IMR-90 (cell line): ENCODE measurements at regions of chr1 and their contacts with region 1.

Region 1: DNA sequence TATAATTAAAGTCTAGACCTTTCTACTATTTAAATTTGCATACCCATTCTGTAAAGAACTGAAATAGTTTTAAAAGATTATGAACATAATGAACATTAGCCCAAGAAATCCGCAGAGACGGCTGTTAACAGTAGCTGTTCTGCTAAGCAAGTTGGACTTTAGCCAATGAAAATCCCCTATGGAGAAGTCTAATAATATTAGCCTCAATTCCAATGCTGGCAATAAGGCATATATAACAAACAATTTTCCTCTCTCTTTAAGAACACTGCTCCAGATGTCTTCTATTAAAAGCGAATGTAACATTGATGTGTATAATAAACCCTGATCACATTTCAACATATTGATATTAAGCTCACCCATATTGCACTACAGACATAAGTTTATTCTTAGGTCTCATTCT is 221.3 kb upstream of the KCTD3 start:
- DNase-seq: peak; percentile 14
- ATAC-seq: no peak
- H3K4me3 ChIP-seq: no peak overlapping the region
- H3K27ac ChIP-seq: no peak overlapping the region
- H3K4me1 ChIP-seq: no peaks in the 10 kb centered on the region
- H3K27me3 ChIP-seq: no peaks in the 10 kb centered on the region
- CTCF ChIP-seq: no peak
- POLR2A ChIP-seq: no peak
- RAD21 ChIP-seq: no peak

Region 2: DNA sequence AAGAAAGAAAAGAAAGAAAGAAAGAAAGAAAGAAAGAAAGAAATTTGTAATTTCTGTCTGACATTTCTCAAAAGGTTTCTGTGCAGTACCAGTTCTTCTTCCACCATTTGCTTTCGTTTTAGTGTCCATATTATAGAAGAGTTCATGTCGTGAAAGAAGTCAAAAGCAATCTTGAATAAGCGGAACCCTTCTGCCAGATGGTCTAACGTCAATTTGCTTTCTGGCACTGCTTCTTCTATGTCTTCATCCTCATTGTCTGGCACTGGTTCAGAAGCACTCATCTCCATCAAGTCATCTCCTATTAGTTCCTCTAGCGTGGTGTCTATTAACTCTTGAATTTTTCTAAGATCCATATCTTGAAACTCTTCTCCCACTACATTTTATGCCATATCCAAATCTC is 51.3 kb after region 1 on chr1:
- CTCF ChIA-PET with region 1: no interaction called
- POLR2A ChIA-PET with region 1: no interaction called
- dilution Hi-C with region 1: no loop called
- in situ Hi-C with region 1: no loop called
- intact Hi-C with region 1: loop called (anchors 5 kb)
- DNase-seq: no peak
- ATAC-seq: no peak
- H3K4me3 ChIP-seq: no peak overlapping the region
- H3K27ac ChIP-seq: no peak overlapping the region
- H3K4me1 ChIP-seq: no peaks in the 10 kb centered on the region
- H3K27me3 ChIP-seq: no peaks in the 10 kb centered on the region; the same call in 1 of the 2 replicates
- CTCF ChIP-seq: no peak
- POLR2A ChIP-seq: no peak
- RAD21 ChIP-seq: no peak

Region 3: DNA sequence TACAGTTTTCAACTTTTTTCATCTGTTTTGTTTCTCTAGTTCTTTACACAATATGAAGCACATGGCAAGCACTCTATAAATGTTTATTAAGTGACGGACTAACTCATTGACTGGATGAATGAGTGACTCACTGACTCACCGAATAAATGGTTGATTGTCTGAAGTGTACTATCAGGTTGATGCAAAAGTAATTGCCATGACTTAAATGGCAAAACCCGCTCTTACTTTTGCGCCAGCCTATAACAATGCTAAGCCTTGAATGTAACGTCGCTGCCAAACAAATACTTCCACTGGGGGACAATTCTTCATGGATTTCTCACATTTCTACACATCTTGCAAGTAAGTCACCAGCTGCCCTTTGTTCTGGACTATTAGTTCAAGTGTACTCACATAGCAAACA is 112.3 kb after region 1 on chr1:
- CTCF ChIA-PET with region 1: no interaction called
- POLR2A ChIA-PET with region 1: no interaction called
- dilution Hi-C with region 1: no loop called
- in situ Hi-C with region 1: no loop called
- intact Hi-C with region 1: loop called (anchors 5 kb)
- DNase-seq: peak; percentile 10
- ATAC-seq: no peak
- H3K4me3 ChIP-seq: no peak overlapping the region
- H3K27ac ChIP-seq: no peak overlapping the region
- H3K4me1 ChIP-seq: no peaks in the 10 kb centered on the region; the same call in 1 of the 2 replicates
- H3K27me3 ChIP-seq: peaks cover 5% of the 10 kb centered on the region; the same call in 1 of the 2 replicates
- CTCF ChIP-seq: no peak
- POLR2A ChIP-seq: no peak
- RAD21 ChIP-seq: no peak

Region 4: GRCh38 chr1:215905493-215906115 is 559.8 kb after region 1 on chr1:
- CTCF ChIA-PET with region 1: no interaction called
- POLR2A ChIA-PET with region 1: no interaction called
- dilution Hi-C with region 1: no loop called
- in situ Hi-C with region 1: no loop called
- intact Hi-C with region 1: no loop called
- DNase-seq: peak; percentile 55
- ATAC-seq: no peak
- H3K4me3 ChIP-seq: no peak overlapping the region
- H3K27ac ChIP-seq: no peak overlapping the region
- H3K4me1 ChIP-seq: 0 out of 2 replicates have a peak, but pooled peaks cover 2% of the 10 kb centered on the region
- H3K27me3 ChIP-seq: no peaks in the 10 kb centered on the region
- CTCF ChIP-seq: no peak
- POLR2A ChIP-seq: no peak
- RAD21 ChIP-seq: no peak